Tibial artery (tissue), 4 donors: ENCODE measurements at regions of chrX and their contacts with region 1.

Region 1: GRCh38 chrX:39805022-39805421 is 292.7 kb downstream of the BCOR start:
- DNase-seq: no peak
- H3K4me3 ChIP-seq: no peak overlapping the region
- H3K27ac ChIP-seq: no peak overlapping the region
- H3K4me1 ChIP-seq: peaks cover 0 to 24% (median 9%) of the 10 kb centered on the region in 4 donors
- H3K27me3 ChIP-seq: no peaks in the 10 kb centered on the region
- CTCF ChIP-seq: no peak

Region 2: DNA sequence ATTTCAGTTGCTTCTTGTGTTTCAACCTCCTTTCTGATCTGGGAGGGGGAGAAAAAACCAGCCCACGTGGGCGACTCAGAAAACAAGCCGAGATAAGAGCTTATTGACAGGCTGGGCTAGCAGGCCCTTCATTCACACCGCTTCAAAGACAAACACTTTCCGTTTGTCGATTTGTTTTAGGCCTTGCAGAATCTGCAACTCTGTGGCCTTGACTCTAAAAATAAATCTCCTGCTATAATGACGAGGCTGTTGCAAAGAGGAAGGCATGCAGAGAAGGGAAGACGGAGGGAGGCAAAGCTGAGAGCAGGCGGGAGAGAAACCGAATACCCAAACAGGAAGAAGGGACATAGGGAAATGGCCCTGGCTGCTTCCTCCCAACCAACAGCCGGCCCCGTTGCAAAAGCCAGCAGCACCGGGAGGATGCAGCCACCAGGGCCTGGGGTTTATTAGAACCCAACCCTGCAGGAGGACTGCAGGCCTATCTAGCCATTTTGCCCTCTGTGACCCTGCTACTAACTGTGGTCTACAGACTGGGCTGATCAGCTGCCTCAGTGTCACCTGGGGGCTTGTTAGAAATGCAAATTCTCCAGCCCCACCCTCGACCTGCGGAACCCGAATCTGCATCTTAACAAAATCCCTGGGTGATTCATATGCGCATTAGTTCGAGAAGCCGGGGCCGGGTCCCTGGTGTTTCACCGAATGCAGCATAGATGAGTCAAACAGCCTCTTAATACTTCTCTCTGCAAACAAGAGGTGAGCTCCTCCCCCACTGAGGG is 32.8 kb before region 1 on chrX:
- intact Hi-C with region 1: loop called (anchors 2 kb)
- DNase-seq: no peak
- H3K4me3 ChIP-seq: no peak overlapping the region
- H3K27ac ChIP-seq: peak overlapping the region; percentile 44 to 59
- H3K4me1 ChIP-seq: peaks cover 0 to 25% (median 4%) of the 10 kb centered on the region in 4 donors
- H3K27me3 ChIP-seq: no peaks in the 10 kb centered on the region
- CTCF ChIP-seq: no peak